MCF 10A (cell line): ENCODE measurements at regions of chr7 and their contacts with region 1.

Region 1: DNA sequence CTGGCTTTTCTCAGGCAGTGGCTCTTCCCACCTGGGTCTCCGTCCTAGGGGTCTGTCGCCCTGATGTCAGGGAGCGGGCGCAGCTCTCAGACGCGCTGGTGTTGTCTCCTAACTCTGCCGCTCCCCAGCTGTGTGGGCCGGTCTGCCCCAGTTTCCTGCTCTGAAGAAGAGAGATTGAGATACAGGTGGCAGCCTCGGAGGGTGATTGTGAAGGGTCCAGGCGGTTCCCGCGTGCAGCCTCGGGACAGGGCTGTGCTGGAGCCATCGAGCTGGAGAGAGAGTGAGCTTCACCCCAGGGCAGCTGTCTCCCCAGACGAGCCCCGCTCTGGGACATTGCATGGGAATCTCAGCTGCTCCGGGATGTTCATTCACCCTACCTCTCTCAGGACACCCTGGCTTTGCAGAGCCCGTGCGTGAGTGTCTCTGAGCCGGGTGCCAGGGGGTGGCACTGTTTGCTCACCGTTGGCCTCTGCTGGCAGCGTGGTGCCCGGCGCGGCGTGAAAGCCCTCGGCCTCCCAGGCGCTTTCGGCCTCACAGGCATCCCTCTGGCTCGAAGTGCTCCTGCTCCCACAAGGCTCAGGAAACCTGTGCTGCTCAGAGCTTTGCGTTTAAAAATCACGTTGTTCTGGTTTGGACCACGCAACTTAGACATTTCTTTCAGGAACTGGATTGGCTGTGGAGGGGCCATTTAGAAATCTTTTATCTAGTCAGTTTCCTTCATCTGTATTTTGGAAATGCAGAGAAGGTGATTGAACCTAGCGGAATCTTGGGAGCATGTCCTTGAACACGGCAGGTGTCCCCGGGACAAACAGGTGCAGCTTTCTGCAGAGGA is 33.8 kb upstream of the ZFAND2A start:
- DNase-seq: peak; percentile 67
- H3K4me3 Mint-ChIP-seq: no peak overlapping the region
- H3K27ac Mint-ChIP-seq: no peak overlapping the region
- H3K4me1 Mint-ChIP-seq: no peaks in the 10 kb centered on the region
- H3K27me3 Mint-ChIP-seq: peaks cover 17% of the 10 kb centered on the region
- CTCF ChIP-seq: peak; percentile 78

Region 2: DNA sequence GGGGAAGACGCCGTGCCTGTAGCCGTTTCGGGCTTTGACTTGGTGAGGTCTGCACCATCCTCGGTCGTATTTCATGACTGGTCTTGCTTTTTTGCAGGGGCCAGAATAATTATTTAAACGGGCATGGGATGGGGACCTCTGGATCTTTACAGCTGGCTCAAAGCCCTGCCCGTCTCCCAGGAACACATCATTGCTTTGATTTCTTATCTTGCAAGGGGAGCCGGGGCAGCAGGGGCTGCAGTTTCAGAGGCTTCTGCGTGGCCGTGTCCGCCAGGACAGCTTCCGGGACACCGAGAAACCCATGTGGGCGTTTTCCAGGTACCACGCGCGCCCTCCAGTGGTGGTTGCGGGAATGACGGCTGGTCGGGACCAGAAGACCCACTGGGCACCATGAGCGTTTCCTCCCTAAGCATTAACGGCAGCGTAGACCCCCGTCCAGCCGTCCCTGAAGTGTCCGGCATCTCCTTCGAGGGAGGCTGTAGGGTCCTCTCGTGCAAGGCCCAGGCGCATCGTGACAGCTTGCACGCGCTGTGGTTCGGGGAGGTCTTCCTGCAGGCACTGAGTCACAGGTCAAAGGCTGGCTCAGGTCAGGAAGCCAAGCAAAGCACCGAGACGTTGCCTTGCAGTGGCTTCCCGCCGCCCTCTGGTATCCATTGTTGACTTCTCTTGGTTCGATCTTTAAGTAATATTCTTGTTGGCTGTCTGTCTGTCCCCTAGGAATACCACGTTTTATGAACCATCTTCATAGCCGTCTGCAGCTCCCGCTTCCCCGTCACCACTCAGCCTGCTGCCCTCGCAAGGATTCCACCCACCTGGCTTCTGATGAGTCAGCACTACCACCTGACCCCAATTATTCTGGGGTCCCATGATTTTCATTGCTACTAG is 17.6 kb before region 1 on chr7:
- CTCF ChIA-PET with region 1: interaction called, 35 read pairs
- POLR2A ChIA-PET with region 1: no interaction called
- intact Hi-C with region 1: no loop called
- DNase-seq: peak; percentile 79
- H3K4me3 Mint-ChIP-seq: peak overlapping the region; percentile 54
- H3K27ac Mint-ChIP-seq: peak overlapping the region; percentile 35
- H3K4me1 Mint-ChIP-seq: peaks cover 5% of the 10 kb centered on the region
- H3K27me3 Mint-ChIP-seq: no peaks in the 10 kb centered on the region
- CTCF ChIP-seq: peak; percentile 93

Region 3: GRCh38 chr7:1412322-1413261 is 218.8 kb after region 1 on chr7:
- CTCF ChIA-PET with region 1: interaction called, 4 read pairs
- POLR2A ChIA-PET with region 1: no interaction called
- intact Hi-C with region 1: loop called (anchors 1 kb)
- DNase-seq: peak; percentile 83
- H3K4me3 Mint-ChIP-seq: no peak overlapping the region
- H3K27ac Mint-ChIP-seq: no peak overlapping the region
- H3K4me1 Mint-ChIP-seq: peaks cover 5% of the 10 kb centered on the region
- H3K27me3 Mint-ChIP-seq: peaks cover 37% of the 10 kb centered on the region
- CTCF ChIP-seq: peak; percentile 91

Region 4: GRCh38 chr7:1432411-1433082 is 238.7 kb after region 1 on chr7:
- CTCF ChIA-PET with region 1: interaction called, 25 read pairs
- POLR2A ChIA-PET with region 1: no interaction called
- intact Hi-C with region 1: loop called (anchors 1 kb)
- DNase-seq: peak; percentile 66
- H3K4me3 Mint-ChIP-seq: no peak overlapping the region
- H3K27ac Mint-ChIP-seq: peak overlapping the region; percentile 3
- H3K4me1 Mint-ChIP-seq: peaks cover 6% of the 10 kb centered on the region
- H3K27me3 Mint-ChIP-seq: no peaks in the 10 kb centered on the region
- CTCF ChIP-seq: peak; percentile 97